Activated CD4-positive, alpha-beta memory T cell treated with anti-CD3 and anti-CD28 coated beads, Interleukin-2, amount 10 ng/mL, durations not matched to agents 7 days and 5 days (primary cell): ENCODE measurements at regions of chr5 and their contacts with region 1.

Region 1: DNA sequence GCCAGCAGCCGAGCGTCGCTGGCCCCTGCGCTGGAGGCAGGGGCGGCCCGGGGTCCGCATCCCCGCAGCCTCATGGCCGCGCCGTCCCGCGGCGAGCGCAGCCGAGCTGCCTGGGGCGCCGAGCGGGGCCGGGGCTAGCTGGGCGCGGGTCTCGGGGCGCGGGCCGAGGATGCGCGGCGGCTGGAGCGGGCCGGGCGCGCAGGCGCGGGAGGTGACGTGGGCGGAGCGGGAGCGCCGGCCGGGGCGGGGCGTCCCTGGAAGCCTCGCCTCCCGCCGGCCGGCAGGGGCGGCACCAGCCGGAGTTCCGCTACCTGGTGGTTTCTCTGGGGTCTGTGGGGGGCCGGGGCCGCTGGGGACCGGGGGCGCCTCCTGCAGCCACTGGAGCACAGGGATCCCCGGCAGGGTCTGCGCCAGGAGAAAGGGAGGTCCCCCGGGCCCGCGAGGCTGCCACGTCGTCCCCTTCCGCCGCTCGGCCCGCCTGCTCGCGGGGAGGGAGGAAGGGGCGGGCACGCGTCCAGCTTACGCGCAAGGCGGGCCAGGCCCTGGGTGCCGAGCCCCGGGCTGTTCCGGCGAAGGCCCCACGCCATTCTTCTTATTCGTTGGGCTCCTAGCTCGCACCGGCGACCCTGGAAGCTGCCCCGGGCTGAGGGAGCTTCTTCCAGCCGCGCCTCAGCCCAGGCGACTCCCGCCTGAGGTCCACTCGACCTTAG is at the start of gene LPCAT1:
- DNase-seq: peak; percentile 78
- H3K4me3 Mint-ChIP-seq: peak within 1 kb of the TSS; percentile 76
- H3K27ac Mint-ChIP-seq: peak within 1 kb of the TSS; percentile 54
- H3K4me1 Mint-ChIP-seq: peaks cover 33% of the 10 kb centered on the region
- H3K27me3 Mint-ChIP-seq: peaks cover 4% of the 10 kb centered on the region
- total RNA-seq, gene LPCAT1: 68.7 to 71.4 TPM

Region 2: DNA sequence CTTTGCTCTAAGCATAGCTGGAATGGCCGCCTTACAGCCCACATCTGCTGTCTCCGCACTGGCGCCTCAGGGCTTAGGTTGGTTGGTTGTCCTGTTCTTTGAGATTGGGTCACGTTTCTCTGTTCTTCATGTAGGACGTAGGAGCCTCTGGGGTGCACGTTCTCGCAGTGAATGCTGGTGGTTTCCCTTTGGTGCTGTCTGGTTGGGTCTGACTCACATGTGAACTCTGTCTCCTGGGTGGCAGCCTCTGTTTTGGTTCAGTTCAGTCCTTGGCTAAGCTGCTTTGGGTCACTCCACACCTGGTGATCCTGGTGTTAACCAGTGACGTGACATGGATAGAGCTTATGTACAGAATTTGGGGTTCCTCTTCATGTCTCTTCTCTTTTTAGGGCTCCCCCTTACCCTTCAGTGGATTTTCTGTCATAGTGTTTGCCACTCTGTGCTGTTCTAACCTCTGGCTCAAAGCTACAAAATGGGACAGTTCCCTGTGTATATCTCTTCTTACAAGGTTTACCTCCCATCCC is 12.5 kb after region 1 on chr5:
- CTCF ChIA-PET with region 1: interaction called, 7 read pairs
- POLR2A ChIA-PET with region 1: interaction called, 17 read pairs
- DNase-seq: peak; percentile 73
- H3K4me3 Mint-ChIP-seq: peak overlapping the region; percentile 68
- H3K27ac Mint-ChIP-seq: peak overlapping the region; percentile 71
- H3K4me1 Mint-ChIP-seq: peaks cover 26% of the 10 kb centered on the region
- H3K27me3 Mint-ChIP-seq: peaks cover 15% of the 10 kb centered on the region